Ascending aorta (tissue), 2 donors: ENCODE measurements at regions of chr17 and their contacts with region 1.

Region 1: GRCh38 chr17:27760069-27760885 is 40.1 kb downstream of the NOS2 start:
- DNase-seq: peak in 1 of 2 donors; percentile 70
- H3K4me3 ChIP-seq: no peak overlapping the region
- H3K27ac ChIP-seq: no peak overlapping the region
- H3K4me1 ChIP-seq: no peaks in the 10 kb centered on the region
- H3K27me3 ChIP-seq: no peaks in the 10 kb centered on the region
- CTCF ChIP-seq: peak; percentile 51 to 85 (median 77)

Region 2: GRCh38 chr17:27654654-27655524 is 105.4 kb before region 1 on chr17:
- intact Hi-C with region 1: loop called (anchors 2 kb)
- DNase-seq: no peak
- H3K4me3 ChIP-seq: no peak overlapping the region
- H3K27ac ChIP-seq: no peak overlapping the region
- H3K4me1 ChIP-seq: no peaks in the 10 kb centered on the region
- H3K27me3 ChIP-seq: no peaks in the 10 kb centered on the region
- CTCF ChIP-seq: peak; percentile 54 to 85 (median 78)

Region 3: GRCh38 chr17:27701963-27702362 is 58.3 kb before region 1 on chr17:
- intact Hi-C with region 1: no loop called
- DNase-seq: no peak
- H3K4me3 ChIP-seq: no peak overlapping the region
- H3K27ac ChIP-seq: no peak overlapping the region
- H3K4me1 ChIP-seq: no peaks in the 10 kb centered on the region
- H3K27me3 ChIP-seq: no peaks in the 10 kb centered on the region
- CTCF ChIP-seq: no peak

Region 4: GRCh38 chr17:27879987-27880608 is 119.8 kb after region 1 on chr17:
- intact Hi-C with region 1: loop called (anchors 1 kb)
- DNase-seq: no peak
- H3K4me3 ChIP-seq: no peak overlapping the region
- H3K27ac ChIP-seq: no peak overlapping the region
- H3K4me1 ChIP-seq: no peaks in the 10 kb centered on the region
- H3K27me3 ChIP-seq: no peaks in the 10 kb centered on the region
- CTCF ChIP-seq: peak; percentile 44 to 63 (median 53)